ENCODE measurements at regions of chr3 and their contacts with region 1.

Region 1: DNA sequence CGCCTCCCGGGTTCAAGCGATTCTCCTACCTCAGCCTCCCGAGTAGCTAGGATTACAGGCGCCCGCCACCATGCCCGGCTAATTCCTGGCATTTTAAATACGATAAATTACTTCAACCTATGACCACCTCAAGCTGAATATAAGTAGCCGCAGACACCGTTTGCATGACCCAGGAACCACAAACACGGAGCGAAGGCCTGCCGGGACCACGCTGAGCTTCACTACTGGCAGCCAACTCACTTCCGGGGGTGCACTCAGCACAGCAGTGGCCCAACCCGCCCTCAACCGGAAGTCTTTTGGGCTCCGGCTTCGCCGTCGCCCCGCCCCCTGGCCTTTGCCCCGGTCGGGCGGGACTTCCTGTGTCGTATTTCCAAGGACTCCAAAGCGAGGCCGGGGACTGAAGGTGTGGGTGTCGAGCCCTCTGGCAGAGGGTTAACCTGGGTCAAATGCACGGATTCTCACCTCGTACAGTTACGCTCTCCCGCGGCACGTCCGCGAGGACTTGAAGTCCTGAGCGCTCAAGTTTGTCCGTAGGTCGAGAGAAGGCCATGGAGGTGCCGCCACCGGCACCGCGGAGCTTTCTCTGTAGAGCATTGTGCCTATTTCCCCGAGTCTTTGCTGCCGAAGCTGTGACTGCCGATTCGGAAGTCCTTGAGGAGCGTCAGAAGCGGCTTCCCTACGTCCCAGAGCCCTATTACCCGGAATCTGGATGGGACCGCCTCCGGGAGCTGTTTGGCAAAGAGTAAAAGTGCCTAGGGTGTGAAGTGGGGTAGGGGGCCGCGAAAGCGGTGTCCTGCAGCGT is at the start of gene TIMMDC1:
- DNase-seq: peak; percentile 99
- ATAC-seq: peak; percentile 99
- H3K4me3 Mint-ChIP-seq: peak within 1 kb of the TSS; percentile 96
- H3K27ac Mint-ChIP-seq: peak within 1 kb of the TSS; percentile 99
- H3K4me1 Mint-ChIP-seq: peaks cover 39% of the 10 kb centered on the region
- H3K27me3 Mint-ChIP-seq: no peaks in the 10 kb centered on the region
- total RNA-seq, gene TIMMDC1: 82.3 to 96.0 TPM

Region 2: DNA sequence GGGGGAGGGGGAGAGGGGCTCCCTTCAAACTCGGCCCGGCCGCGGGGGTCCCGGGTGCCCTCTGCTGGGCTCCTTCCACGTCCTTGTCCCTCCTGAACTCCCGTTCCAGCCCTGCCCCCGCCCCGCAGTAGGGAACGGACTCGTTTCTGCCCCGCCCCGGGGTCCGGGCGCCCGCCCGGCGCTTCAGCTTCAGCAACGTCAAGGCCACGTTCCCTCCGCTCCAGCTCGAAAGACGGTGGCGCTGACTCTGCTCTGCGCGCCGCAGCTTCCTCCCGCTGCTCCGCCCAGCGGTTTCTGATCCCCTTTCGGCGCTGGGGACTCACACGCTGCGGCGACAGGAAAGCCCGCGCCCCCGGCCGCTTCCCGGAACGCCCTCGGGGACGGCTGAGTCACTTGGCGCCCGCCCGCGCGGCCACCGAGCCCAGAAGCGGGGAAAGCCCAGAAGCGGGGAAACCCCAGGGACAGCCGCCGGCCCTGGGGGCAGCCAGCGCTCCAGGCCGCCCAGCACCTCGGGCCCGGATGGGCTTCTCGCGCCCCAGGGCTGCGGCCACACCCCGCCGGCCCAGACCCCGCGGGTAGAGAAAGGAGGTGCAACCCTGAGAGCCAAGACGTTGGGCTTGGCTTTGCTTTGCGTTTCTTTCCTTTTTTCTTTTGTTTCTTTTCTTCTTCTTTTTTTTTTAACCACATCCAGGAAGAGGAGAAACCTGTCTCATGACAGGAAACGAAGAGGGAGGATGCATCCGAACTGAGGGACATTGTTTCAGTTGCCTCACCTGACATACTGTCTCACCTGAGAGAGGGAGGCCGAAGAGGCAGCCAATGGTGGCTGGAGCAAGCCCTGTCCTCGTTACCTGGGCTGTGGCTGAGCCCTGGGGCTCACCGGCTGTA is 175.3 kb before region 1 on chr3:
- CTCF ChIA-PET with region 1: no interaction called
- POLR2A ChIA-PET with region 1: interaction called, 3 read pairs
- intact Hi-C with region 1: loop called in 1 of 2 experiments (anchors 1 kb)
- DNase-seq: peak; percentile 97
- ATAC-seq: peak; percentile 92
- H3K4me3 Mint-ChIP-seq: peak overlapping the region; percentile 83
- H3K27ac Mint-ChIP-seq: peak overlapping the region; percentile 87
- H3K4me1 Mint-ChIP-seq: peaks cover 46% of the 10 kb centered on the region
- H3K27me3 Mint-ChIP-seq: no peaks in the 10 kb centered on the region

Region 3: GRCh38 chr3:119469381-119470189 is 28.8 kb before region 1 on chr3:
- CTCF ChIA-PET with region 1: interaction called, 3 read pairs
- POLR2A ChIA-PET with region 1: interaction called, 26 read pairs
- intact Hi-C with region 1: loop called (anchors 1 kb)
- DNase-seq: no peak
- ATAC-seq: peak; percentile 47
- H3K4me3 Mint-ChIP-seq: peak overlapping the region; percentile 83
- H3K27ac Mint-ChIP-seq: peak overlapping the region; percentile 90
- H3K4me1 Mint-ChIP-seq: peaks cover 35% of the 10 kb centered on the region
- H3K27me3 Mint-ChIP-seq: no peaks in the 10 kb centered on the region

Region 4: GRCh38 chr3:119529883-119530282 is 31.5 kb after region 1 on chr3:
- CTCF ChIA-PET with region 1: no interaction called
- POLR2A ChIA-PET with region 1: no interaction called
- intact Hi-C with region 1: no loop called
- DNase-seq: no peak
- ATAC-seq: no peak
- H3K4me3 Mint-ChIP-seq: no peak overlapping the region
- H3K27ac Mint-ChIP-seq: no peak overlapping the region
- H3K4me1 Mint-ChIP-seq: no peaks in the 10 kb centered on the region
- H3K27me3 Mint-ChIP-seq: no peaks in the 10 kb centered on the region

Region 5: DNA sequence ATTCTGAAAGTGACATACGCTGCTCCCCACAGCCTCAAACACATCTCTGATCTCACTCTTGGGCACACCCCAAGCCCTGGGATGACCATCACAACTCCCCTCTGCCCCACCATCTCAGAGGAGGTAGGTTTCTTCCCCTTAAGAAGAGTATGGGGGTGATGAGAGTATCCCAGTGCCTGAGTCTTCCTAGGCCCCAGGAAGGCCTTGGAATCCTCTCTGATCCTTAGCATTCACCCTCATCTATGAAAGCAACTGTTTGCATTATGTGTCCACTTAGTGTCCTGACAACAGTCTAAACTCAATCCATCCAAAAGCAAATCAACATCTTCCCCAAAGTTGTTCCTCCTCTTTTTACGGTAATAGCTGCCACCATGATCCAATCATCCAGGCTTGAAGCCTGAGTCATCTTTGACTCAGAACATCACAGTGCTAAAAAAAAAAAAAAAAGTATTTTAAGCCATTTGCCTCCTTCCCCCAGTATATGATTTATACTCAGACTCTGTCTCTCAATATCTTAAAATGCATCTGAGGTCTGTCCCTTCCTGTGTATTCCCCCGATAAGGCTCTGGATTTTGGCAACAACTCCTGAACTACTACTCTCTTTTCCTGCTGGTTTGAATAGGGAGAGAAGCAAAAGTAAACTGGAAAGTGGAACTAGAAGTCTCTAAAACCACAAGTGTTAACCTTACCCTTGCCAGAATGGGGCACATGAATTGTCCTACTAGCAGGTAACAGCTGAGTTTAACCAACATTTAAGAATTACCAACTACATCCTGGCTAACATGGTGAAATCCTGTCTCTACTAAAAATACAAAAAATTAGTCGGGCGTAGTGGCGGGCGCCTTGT is 139.5 kb after region 1 on chr3:
- CTCF ChIA-PET with region 1: no interaction called
- POLR2A ChIA-PET with region 1: interaction called, 3 read pairs
- intact Hi-C with region 1: loop called in 1 of 2 experiments (anchors 2 kb)
- DNase-seq: peak; percentile 14
- ATAC-seq: peak; percentile 34
- H3K4me3 Mint-ChIP-seq: no peak overlapping the region
- H3K27ac Mint-ChIP-seq: peak overlapping the region; percentile 92
- H3K4me1 Mint-ChIP-seq: peaks cover 38% of the 10 kb centered on the region
- H3K27me3 Mint-ChIP-seq: no peaks in the 10 kb centered on the region

Region 6: GRCh38 chr3:119702530-119703157 is 204.3 kb after region 1 on chr3 and contains the start of gene CFAP91:
- CTCF ChIA-PET with region 1: interaction called, 3 read pairs
- POLR2A ChIA-PET with region 1: no interaction called
- intact Hi-C with region 1: loop called in 1 of 2 experiments (anchors 1 kb)
- DNase-seq: peak; percentile 90
- ATAC-seq: peak; percentile 86
- H3K4me3 Mint-ChIP-seq: peak within 1 kb of the TSS; percentile 67
- H3K27ac Mint-ChIP-seq: peak within 1 kb of the TSS; percentile 59
- H3K4me1 Mint-ChIP-seq: peaks cover 39% of the 10 kb centered on the region
- H3K27me3 Mint-ChIP-seq: peaks cover 5% of the 10 kb centered on the region
- total RNA-seq, gene CFAP91: 0.25 to 0.67 TPM